PC-3 (cell line): ENCODE measurements at regions of chr11 and their contacts with region 1.

Region 1: DNA sequence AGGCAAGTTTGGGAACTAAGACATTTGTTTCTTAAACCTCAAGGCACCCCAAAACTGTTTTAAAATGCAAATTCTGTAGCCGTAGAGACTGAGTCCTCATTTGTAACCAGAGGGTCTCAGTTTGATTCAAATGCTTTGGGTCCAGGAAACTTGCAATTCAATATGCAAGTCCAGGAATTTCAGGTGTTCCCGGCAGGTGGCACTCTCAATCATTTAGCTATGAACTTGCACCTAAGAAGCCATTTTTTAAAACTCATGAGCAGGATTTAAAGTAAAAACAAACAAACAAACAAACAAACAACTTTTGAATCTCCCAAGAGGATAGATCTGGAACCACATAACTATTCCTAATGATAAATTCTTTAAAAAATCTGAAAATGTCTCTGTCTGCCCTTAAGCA is 8.7 kb upstream of the ABTB2 start:
- DNase-seq: peak; percentile 70
- ATAC-seq: no peak
- H3K4me3 ChIP-seq: no peak overlapping the region
- H3K27ac ChIP-seq: no peak overlapping the region
- H3K4me1 ChIP-seq: peaks cover 10% of the 10 kb centered on the region
- H3K27me3 ChIP-seq: no peaks in the 10 kb centered on the region
- CTCF ChIP-seq: peak; percentile 87

Region 2: DNA sequence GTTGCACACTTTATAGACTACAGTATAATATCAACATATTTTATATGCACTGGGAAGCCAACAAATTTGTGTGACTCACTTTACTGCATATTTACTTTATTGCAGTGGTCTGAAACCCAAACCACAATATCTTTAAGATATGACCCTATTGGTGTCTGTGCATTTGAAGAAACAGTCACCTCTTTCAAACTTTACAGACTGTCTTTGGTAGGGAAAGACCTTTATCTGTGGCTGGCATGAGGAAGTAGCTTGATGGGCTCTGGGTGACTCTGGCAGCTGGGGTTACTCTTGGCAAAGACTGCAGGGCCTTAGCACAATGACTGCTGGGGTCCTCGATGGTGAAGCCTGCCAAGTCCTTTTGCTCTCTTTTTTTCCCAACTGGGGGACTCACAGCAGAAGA is 12.6 kb after region 1 on chr11:
- CTCF ChIA-PET with region 1: interaction called, 4 read pairs
- POLR2A ChIA-PET with region 1: no interaction called
- intact Hi-C with region 1: loop called (anchors 1 kb)
- DNase-seq: peak; percentile 94
- ATAC-seq: peak; percentile 90
- H3K4me3 ChIP-seq: peak overlapping the region; percentile 34; the same call in 1 of the 2 replicates
- H3K27ac ChIP-seq: peak overlapping the region; percentile 97
- H3K4me1 ChIP-seq: peaks cover 30% of the 10 kb centered on the region
- H3K27me3 ChIP-seq: no peaks in the 10 kb centered on the region
- CTCF ChIP-seq: no peak

Region 3: DNA sequence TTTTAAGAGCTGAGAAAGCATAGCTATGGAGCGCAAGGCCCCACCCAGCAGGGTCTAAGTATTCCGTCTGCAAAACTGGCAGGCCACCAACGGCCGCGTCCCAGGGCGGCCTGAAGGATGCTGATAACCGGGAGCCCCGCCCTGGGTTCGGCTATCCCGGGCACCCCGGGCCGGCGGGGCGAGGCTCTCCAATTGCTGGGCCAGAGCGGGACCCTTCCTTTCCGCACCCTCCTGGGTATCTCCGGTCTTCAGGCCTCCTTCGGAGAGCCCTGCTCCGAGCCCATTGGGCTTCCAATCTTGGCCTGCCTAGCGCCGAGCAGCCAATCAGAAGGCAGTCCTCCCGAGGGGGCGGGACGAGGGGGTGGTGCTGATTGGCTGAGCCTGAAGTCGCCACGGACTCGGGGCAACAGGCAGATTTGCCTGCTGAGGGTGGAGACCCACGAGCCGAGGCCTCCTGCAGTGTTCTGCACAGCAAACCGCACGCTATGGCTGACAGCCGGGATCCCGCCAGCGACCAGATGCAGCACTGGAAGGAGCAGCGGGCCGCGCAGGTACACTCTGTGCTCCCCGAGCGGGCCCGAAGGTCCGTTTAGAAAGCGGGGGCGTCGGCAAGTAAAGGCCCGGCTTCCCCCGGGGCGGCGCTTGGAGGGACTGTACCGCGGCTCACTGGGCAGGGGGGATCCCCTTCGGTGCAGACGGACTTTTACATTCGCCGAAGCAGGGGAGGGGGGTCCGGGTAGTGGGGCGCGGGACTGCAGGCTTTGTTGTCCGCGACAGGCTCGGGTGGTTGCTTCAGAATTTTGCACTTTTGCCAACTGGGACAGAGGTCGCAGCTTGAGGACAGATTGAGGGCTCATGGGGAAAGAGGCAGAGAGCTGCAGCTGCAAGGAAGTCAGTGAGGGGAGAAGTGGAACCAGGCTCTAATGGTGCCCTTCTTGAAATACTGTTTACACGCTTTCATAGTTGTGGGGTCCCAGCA is 72.3 kb after region 1 on chr11 and contains the start of gene CAT:
- CTCF ChIA-PET with region 1: interaction called, 3 read pairs
- POLR2A ChIA-PET with region 1: no interaction called
- intact Hi-C with region 1: loop called (anchors 1 kb)
- DNase-seq: peak; percentile 96
- ATAC-seq: peak; percentile 98
- H3K4me3 ChIP-seq: peak within 1 kb of the TSS; percentile 89
- H3K27ac ChIP-seq: peak within 1 kb of the TSS; percentile 53
- H3K4me1 ChIP-seq: peaks cover 27% of the 10 kb centered on the region
- H3K27me3 ChIP-seq: no peaks in the 10 kb centered on the region
- CTCF ChIP-seq: no peak
- total RNA-seq, gene CAT: 46.6 and 50.5 TPM in 2 replicates

Region 4: GRCh38 chr11:34468209-34468841 is 101.8 kb after region 1 on chr11:
- CTCF ChIA-PET with region 1: interaction called, 27 read pairs
- POLR2A ChIA-PET with region 1: no interaction called
- intact Hi-C with region 1: loop called (anchors 1 kb)
- DNase-seq: peak; percentile 81
- ATAC-seq: peak; percentile 74
- H3K4me3 ChIP-seq: no peak overlapping the region
- H3K27ac ChIP-seq: no peak overlapping the region
- H3K4me1 ChIP-seq: no peaks in the 10 kb centered on the region
- H3K27me3 ChIP-seq: no peaks in the 10 kb centered on the region
- CTCF ChIP-seq: peak; percentile 94

Region 5: GRCh38 chr11:34492806-34493414 is 126.4 kb after region 1 on chr11:
- CTCF ChIA-PET with region 1: interaction called, 6 read pairs
- POLR2A ChIA-PET with region 1: no interaction called
- intact Hi-C with region 1: loop called (anchors 1 kb)
- DNase-seq: peak; percentile 72
- ATAC-seq: 0 out of 2 replicates have a peak, but pooled peaks have one; percentile 44
- H3K4me3 ChIP-seq: no peak overlapping the region
- H3K27ac ChIP-seq: no peak overlapping the region
- H3K4me1 ChIP-seq: peaks cover 7% of the 10 kb centered on the region
- H3K27me3 ChIP-seq: no peaks in the 10 kb centered on the region
- CTCF ChIP-seq: peak; percentile 84

Region 6: DNA sequence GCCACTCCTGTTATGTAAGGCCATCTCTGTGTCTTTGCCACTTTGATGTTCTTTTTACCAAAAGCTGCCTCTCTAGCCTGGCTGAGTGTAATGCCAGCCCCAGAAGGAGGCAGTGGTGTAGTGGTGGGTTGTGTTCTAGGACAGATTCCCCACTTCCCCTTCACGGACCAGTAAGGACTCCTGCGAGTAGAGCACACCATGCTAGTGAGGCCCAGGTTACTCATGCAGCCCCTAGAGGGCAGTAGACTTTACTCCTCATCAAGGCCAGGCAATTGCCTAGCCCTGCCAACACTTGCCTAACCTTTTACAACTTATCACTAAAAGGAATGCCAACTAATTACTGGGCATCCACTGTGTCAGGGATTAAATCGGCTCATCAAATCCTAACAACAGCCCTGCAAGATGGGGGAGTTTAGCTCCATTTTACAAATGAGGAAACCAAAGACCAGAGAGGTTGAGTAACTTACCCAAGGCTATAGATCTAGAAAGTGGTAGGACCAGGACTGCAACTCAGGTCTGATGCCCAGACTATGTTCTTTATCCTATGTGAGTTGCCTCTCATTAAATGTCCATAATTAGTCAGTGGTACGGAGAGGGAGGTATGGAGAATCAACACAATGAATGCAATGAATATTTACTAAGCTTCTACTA is 474.3 kb after region 1 on chr11:
- CTCF ChIA-PET with region 1: no interaction called
- POLR2A ChIA-PET with region 1: no interaction called
- intact Hi-C with region 1: no loop called
- DNase-seq: peak; percentile 27
- ATAC-seq: no peak
- H3K4me3 ChIP-seq: no peak overlapping the region
- H3K27ac ChIP-seq: no peak overlapping the region
- H3K4me1 ChIP-seq: no peaks in the 10 kb centered on the region
- H3K27me3 ChIP-seq: no peaks in the 10 kb centered on the region
- CTCF ChIP-seq: peak; percentile 67